IMR-90 (cell line): ENCODE measurements at regions of chr5 and their contacts with region 1.

Region 1: DNA sequence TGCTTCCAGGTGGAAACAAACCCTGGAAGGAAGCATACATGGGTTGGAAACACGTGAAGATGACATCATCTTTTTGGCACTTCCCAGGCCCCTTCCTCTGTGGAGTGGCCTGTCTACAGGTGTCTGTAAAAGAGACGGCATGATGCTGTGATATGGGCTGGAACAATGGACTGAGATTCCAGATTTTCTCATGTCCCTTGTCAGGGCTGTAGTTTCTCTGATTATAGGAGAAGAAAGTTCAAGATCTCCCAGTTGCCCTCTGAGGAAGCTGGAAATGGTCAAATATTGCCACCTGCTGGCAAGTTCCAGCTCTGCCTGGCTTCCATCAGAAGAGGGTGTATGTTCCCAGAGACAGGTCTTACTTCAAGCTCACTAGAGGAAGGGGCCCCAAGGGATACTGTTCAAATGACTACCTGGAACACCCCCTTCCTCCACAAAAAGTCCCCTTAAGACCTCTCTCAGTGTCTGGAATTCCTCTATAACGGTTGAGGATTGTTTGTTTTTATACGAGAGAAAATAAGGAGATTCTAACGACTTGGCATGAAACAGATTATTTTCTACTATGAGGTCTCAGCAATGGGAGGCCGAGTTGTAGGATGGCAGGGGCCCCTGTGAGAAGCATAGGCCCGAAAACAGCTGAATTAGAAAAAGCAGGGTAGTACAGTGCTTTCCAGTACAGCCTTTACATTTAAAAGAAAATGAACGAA is 7.3 kb upstream of the ANXA6 start:
- DNase-seq: peak; percentile 76
- ATAC-seq: peak; percentile 91
- H3K4me3 ChIP-seq: no peak overlapping the region
- H3K27ac ChIP-seq: no peak overlapping the region
- H3K4me1 ChIP-seq: no peaks in the 10 kb centered on the region; the same call in 1 of the 2 replicates
- H3K27me3 ChIP-seq: peaks cover 9% of the 10 kb centered on the region; the same call in 1 of the 2 replicates
- CTCF ChIP-seq: peak; percentile 95
- POLR2A ChIP-seq: no peak
- RAD21 ChIP-seq: peak; percentile 93

Region 2: DNA sequence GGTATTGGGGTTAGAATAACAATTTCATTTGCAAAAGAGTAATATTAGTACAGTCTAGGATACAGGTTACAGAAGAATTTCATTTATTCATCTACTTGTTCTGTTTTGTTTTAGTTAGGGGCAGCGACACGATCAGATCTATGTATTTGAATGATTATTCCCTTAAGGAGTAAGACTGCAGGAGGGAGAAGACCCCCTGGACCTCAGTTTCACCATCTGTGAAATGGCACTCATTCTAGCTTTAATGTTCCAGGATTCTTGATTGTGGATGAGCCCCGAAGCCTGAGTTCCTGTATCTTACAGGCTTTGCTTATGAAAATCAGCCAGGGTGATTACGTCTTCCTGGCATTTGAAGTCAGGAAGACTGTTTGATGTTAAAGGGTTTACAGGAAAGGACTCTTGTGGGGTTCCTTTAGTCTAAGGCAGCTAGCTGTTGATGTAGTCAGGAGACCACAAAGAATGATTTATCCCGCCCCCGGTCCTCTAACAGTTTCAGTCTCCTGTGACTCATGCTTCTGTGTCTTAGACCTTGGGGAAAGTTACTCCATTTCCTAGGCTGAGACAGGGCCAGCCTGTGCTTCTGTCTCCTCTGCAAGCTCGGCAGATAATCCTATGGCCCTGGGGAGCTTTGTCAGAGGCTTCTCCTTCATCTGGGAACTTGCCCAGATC is 374.8 kb before region 1 on chr5:
- CTCF ChIA-PET with region 1: no interaction called
- POLR2A ChIA-PET with region 1: no interaction called
- dilution Hi-C with region 1: no loop called
- in situ Hi-C with region 1: loop called (anchors 10 kb)
- intact Hi-C with region 1: no loop called
- DNase-seq: peak; percentile 99
- ATAC-seq: peak; percentile 95
- H3K4me3 ChIP-seq: no peak overlapping the region; the same call in 1 of the 2 replicates
- H3K27ac ChIP-seq: peak overlapping the region; percentile 94
- H3K4me1 ChIP-seq: peaks cover 15% of the 10 kb centered on the region
- H3K27me3 ChIP-seq: no peaks in the 10 kb centered on the region
- CTCF ChIP-seq: no peak
- POLR2A ChIP-seq: peak; percentile 56; the same call in 1 of the 2 replicates
- RAD21 ChIP-seq: no peak

Region 3: GRCh38 chr5:151002250-151002649 is 162.6 kb before region 1 on chr5:
- CTCF ChIA-PET with region 1: interaction called, 11 read pairs
- POLR2A ChIA-PET with region 1: no interaction called
- dilution Hi-C with region 1: no loop called
- in situ Hi-C with region 1: no loop called
- intact Hi-C with region 1: loop called (anchors 1 kb)
- DNase-seq: peak; percentile 41
- ATAC-seq: peak; percentile 46
- H3K4me3 ChIP-seq: no peak overlapping the region
- H3K27ac ChIP-seq: no peak overlapping the region
- H3K4me1 ChIP-seq: peaks cover 12% of the 10 kb centered on the region; the same call in 1 of the 2 replicates
- H3K27me3 ChIP-seq: peaks cover 11% of the 10 kb centered on the region
- CTCF ChIP-seq: peak; percentile 64
- POLR2A ChIP-seq: no peak
- RAD21 ChIP-seq: peak; percentile 72

Region 4: GRCh38 chr5:151051066-151051930 is 113.5 kb before region 1 on chr5:
- CTCF ChIA-PET with region 1: interaction called, 12 read pairs
- POLR2A ChIA-PET with region 1: interaction called, 3 read pairs
- dilution Hi-C with region 1: no loop called
- in situ Hi-C with region 1: no loop called
- intact Hi-C with region 1: loop called (anchors 1 kb)
- DNase-seq: peak; percentile 75
- ATAC-seq: peak; percentile 96
- H3K4me3 ChIP-seq: no peak overlapping the region
- H3K27ac ChIP-seq: no peak overlapping the region
- H3K4me1 ChIP-seq: peaks cover 6% of the 10 kb centered on the region; the same call in 1 of the 2 replicates
- H3K27me3 ChIP-seq: no peaks in the 10 kb centered on the region
- CTCF ChIP-seq: peak; percentile 91
- POLR2A ChIP-seq: no peak
- RAD21 ChIP-seq: peak; percentile 94

Region 5: GRCh38 chr5:151126199-151126645 is 38.6 kb before region 1 on chr5:
- CTCF ChIA-PET with region 1: interaction called, 13 read pairs
- POLR2A ChIA-PET with region 1: no interaction called
- dilution Hi-C with region 1: no loop called
- in situ Hi-C with region 1: no loop called
- intact Hi-C with region 1: loop called (anchors 1 kb)
- DNase-seq: peak; percentile 51
- ATAC-seq: peak; percentile 79
- H3K4me3 ChIP-seq: no peak overlapping the region
- H3K27ac ChIP-seq: no peak overlapping the region
- H3K4me1 ChIP-seq: peaks cover 2% of the 10 kb centered on the region; the same call in 1 of the 2 replicates
- H3K27me3 ChIP-seq: no peaks in the 10 kb centered on the region
- CTCF ChIP-seq: peak; percentile 63
- POLR2A ChIP-seq: no peak
- RAD21 ChIP-seq: peak; percentile 63